Naive thymus-derived CD4-positive, alpha-beta T cell (primary cell): ENCODE measurements at regions of chr2 and their contacts with region 1.

Region 1: GRCh38 chr2:207473049-207473930 is 56.5 kb upstream of the CREB1 start:
- DNase-seq: peak in 8 of 9 donors; percentile 25 to 68 (median 52)
- ATAC-seq: peak; percentile 76
- H3K4me3 ChIP-seq: no peak overlapping the region
- H3K4me3 Mint-ChIP-seq: peak overlapping the region in 4 of 10 donors; percentile 20 to 52 (median 42)
- H3K27ac ChIP-seq: no peak overlapping the region
- H3K27ac Mint-ChIP-seq: peak overlapping the region in 7 of 9 donors; percentile 14 to 71 (median 48)
- H3K4me1 ChIP-seq: no peaks in the 10 kb centered on the region
- H3K4me1 Mint-ChIP-seq: peaks cover 6 to 23% (median 18%) of the 10 kb centered on the region in 7 donors
- H3K27me3 ChIP-seq: no peaks in the 10 kb centered on the region
- H3K27me3 Mint-ChIP-seq: peaks cover 0 to 4% (median 0%) of the 10 kb centered on the region in 5 donors

Region 2: GRCh38 chr2:206937555-206937954 is 535.7 kb before region 1 on chr2:
- CTCF ChIA-PET with region 1: no interaction called
- POLR2A ChIA-PET with region 1: no interaction called
- intact Hi-C with region 1: no loop called
- DNase-seq: no peak
- ATAC-seq: no peak
- H3K4me3 ChIP-seq: no peak overlapping the region
- H3K4me3 Mint-ChIP-seq: no peak overlapping the region
- H3K27ac ChIP-seq: no peak overlapping the region
- H3K27ac Mint-ChIP-seq: no peak overlapping the region
- H3K4me1 ChIP-seq: no peaks in the 10 kb centered on the region
- H3K4me1 Mint-ChIP-seq: no peaks in the 10 kb centered on the region
- H3K27me3 ChIP-seq: no peaks in the 10 kb centered on the region
- H3K27me3 Mint-ChIP-seq: no peaks in the 10 kb centered on the region

Region 3: DNA sequence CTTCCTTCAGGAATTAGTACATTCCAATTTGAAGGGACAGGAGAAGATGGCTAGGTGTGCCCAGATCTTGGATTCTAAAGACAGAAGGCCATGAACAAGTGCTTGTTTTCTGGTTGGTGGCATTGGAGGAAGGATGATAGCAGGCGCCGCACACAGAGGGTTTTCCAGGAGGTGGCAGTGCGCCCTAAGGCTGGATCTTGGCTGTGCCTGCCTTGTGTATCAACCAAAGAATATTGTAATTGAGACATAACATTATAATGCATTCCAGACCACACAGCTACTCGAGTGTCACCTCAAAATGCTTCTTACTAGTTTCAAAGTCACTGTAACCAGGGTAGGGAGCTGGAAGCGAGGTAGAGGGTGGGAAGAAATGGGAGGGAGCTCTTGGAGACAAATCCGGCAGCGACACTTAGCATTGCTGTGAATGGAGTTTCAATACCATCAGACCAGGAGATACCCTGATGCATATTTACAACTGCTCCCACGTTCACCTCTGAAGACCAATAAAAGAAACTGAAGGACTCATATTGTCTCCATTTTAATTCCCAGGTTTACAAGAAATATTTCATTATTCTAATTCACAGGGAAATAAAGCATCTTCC is 491.4 kb before region 1 on chr2:
- CTCF ChIA-PET with region 1: interaction called, 18 read pairs
- POLR2A ChIA-PET with region 1: no interaction called
- intact Hi-C with region 1: loop called (anchors 1 kb)
- DNase-seq: peak; percentile 12 to 61 (median 39)
- ATAC-seq: peak; percentile 67
- H3K4me3 ChIP-seq: no peak overlapping the region
- H3K4me3 Mint-ChIP-seq: no peak overlapping the region
- H3K27ac ChIP-seq: no peak overlapping the region
- H3K27ac Mint-ChIP-seq: peak overlapping the region in 2 of 9 donors; percentile 46 to 63
- H3K4me1 ChIP-seq: peaks cover 0 to 7% of the 10 kb centered on the region in 2 donors
- H3K4me1 Mint-ChIP-seq: peaks cover 0 to 25% (median 11%) of the 10 kb centered on the region in 7 donors
- H3K27me3 ChIP-seq: no peaks in the 10 kb centered on the region
- H3K27me3 Mint-ChIP-seq: peaks cover 0 to 6% (median 0%) of the 10 kb centered on the region in 5 donors

Region 4: GRCh38 chr2:207230261-207231105 is 242.8 kb before region 1 on chr2:
- CTCF ChIA-PET with region 1: no interaction called
- POLR2A ChIA-PET with region 1: no interaction called
- intact Hi-C with region 1: loop called in 1 of 2 experiments (anchors 10 kb)
- DNase-seq: no peak
- ATAC-seq: no peak
- H3K4me3 ChIP-seq: no peak overlapping the region
- H3K4me3 Mint-ChIP-seq: peak overlapping the region in 2 of 10 donors; percentile 10 to 65
- H3K27ac ChIP-seq: no peak overlapping the region
- H3K27ac Mint-ChIP-seq: peak overlapping the region in 3 of 9 donors; percentile 19 to 42 (median 22)
- H3K4me1 ChIP-seq: peaks cover 0 to 14% of the 10 kb centered on the region in 2 donors
- H3K4me1 Mint-ChIP-seq: peaks cover 3 to 56% (median 42%) of the 10 kb centered on the region in 7 donors
- H3K27me3 ChIP-seq: no peaks in the 10 kb centered on the region
- H3K27me3 Mint-ChIP-seq: peaks cover 0 to 3% (median 0%) of the 10 kb centered on the region in 5 donors

Region 5: GRCh38 chr2:207352978-207353671 is 120.2 kb before region 1 on chr2:
- CTCF ChIA-PET with region 1: no interaction called
- POLR2A ChIA-PET with region 1: no interaction called
- intact Hi-C with region 1: loop called (anchors 5 to 10 kb)
- DNase-seq: peak in 5 of 9 donors; percentile 8 to 37 (median 32)
- ATAC-seq: peak; percentile 51
- H3K4me3 ChIP-seq: no peak overlapping the region
- H3K4me3 Mint-ChIP-seq: peak overlapping the region in 2 of 10 donors; percentile 17 to 26
- H3K27ac ChIP-seq: no peak overlapping the region
- H3K27ac Mint-ChIP-seq: peak overlapping the region in 3 of 9 donors; percentile 6 to 65 (median 53)
- H3K4me1 ChIP-seq: no peaks in the 10 kb centered on the region
- H3K4me1 Mint-ChIP-seq: peaks cover 0 to 12% (median 9%) of the 10 kb centered on the region in 7 donors
- H3K27me3 ChIP-seq: no peaks in the 10 kb centered on the region
- H3K27me3 Mint-ChIP-seq: no peaks in the 10 kb centered on the region

Region 6: GRCh38 chr2:207635468-207636200 is 162.3 kb after region 1 on chr2:
- CTCF ChIA-PET with region 1: no interaction called
- POLR2A ChIA-PET with region 1: no interaction called
- intact Hi-C with region 1: no loop called
- DNase-seq: no peak
- ATAC-seq: no peak
- H3K4me3 ChIP-seq: no peak overlapping the region
- H3K4me3 Mint-ChIP-seq: no peak overlapping the region
- H3K27ac ChIP-seq: no peak overlapping the region
- H3K27ac Mint-ChIP-seq: no peak overlapping the region
- H3K4me1 ChIP-seq: no peaks in the 10 kb centered on the region
- H3K4me1 Mint-ChIP-seq: peaks cover 0 to 5% (median 0%) of the 10 kb centered on the region in 7 donors
- H3K27me3 ChIP-seq: no peaks in the 10 kb centered on the region
- H3K27me3 Mint-ChIP-seq: no peaks in the 10 kb centered on the region

Region 7: GRCh38 chr2:208040199-208041171 is 567.2 kb after region 1 on chr2:
- CTCF ChIA-PET with region 1: no interaction called
- POLR2A ChIA-PET with region 1: no interaction called
- intact Hi-C with region 1: loop called in 1 of 2 experiments (anchors 5 kb)
- DNase-seq: peak; percentile 21 to 67 (median 54)
- ATAC-seq: peak; percentile 77
- H3K4me3 ChIP-seq: no peak overlapping the region
- H3K4me3 Mint-ChIP-seq: no peak overlapping the region
- H3K27ac ChIP-seq: no peak overlapping the region
- H3K27ac Mint-ChIP-seq: peak overlapping the region in 1 of 9 donors; percentile 25
- H3K4me1 ChIP-seq: no peaks in the 10 kb centered on the region
- H3K4me1 Mint-ChIP-seq: no peaks in the 10 kb centered on the region
- H3K27me3 ChIP-seq: no peaks in the 10 kb centered on the region
- H3K27me3 Mint-ChIP-seq: peaks cover 0 to 10% (median 5%) of the 10 kb centered on the region in 5 donors

Region 8: GRCh38 chr2:209029249-209029648 is 1556.0 kb after region 1 on chr2:
- CTCF ChIA-PET with region 1: no interaction called
- POLR2A ChIA-PET with region 1: no interaction called
- intact Hi-C with region 1: no loop called
- DNase-seq: no peak
- ATAC-seq: no peak
- H3K4me3 ChIP-seq: no peak overlapping the region
- H3K4me3 Mint-ChIP-seq: no peak overlapping the region
- H3K27ac ChIP-seq: no peak overlapping the region
- H3K27ac Mint-ChIP-seq: no peak overlapping the region
- H3K4me1 ChIP-seq: no peaks in the 10 kb centered on the region
- H3K4me1 Mint-ChIP-seq: no peaks in the 10 kb centered on the region
- H3K27me3 ChIP-seq: no peaks in the 10 kb centered on the region
- H3K27me3 Mint-ChIP-seq: no peaks in the 10 kb centered on the region